ENCODE measurements at regions of chr2 and their contacts with region 1.

Region 1: DNA sequence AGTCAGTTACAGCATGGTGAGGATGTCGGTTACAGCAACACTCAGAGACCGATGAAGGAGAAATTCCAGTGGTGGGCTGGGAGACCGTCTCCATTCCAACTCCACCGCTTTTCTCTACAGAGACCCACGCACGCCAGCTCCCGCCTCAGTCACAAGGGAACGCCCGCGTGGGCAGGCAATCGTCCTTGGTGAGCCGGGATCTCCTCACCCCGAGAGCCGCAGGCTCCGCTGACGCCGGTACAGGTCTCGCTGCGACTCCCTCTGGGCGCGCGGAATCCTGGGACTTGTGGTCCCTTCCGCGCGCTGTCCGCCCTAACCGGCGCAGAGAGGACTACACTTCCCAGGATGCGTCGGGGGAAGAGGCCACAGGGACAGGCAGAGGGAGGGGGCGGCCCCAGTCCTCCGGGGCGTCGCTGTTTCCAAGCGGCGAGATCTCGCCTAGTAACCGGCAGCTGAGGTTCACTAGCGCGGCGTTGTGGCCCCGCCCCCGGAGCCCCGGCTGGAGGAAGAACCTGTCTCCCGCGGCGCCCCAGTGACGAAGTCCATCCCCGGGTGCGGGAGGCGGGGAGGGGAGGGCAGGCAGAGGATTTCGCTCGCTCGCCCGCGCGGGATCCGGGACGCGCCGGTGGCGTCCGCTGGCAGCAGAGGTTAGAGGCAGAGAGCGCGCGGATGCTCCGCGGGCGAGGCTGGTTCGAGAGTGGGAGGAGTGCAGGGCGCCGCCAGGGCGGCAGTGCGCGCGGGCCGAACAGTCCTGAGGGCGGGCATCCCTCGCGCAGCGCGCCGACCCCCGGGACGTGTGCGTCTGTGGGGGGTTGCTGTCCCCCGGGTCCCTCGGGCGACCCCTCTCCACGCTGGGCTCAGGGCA is at the start of gene EML6:
- DNase-seq: peak; percentile 97 to 98
- ATAC-seq: peak; percentile 99 to 100 (median 100)
- H3K4me3 ChIP-seq: peak within 1 kb of the TSS; percentile 65 to 93 (median 82)
- H3K27ac ChIP-seq: peak within 1 kb of the TSS in 9 of 10 donors; percentile 65 to 81 (median 70)
- H3K4me1 ChIP-seq: peaks cover 0 to 17% (median 9%) of the 10 kb centered on the region in 9 donors
- H3K27me3 ChIP-seq: peaks cover 0 to 50% (median 0%) of the 10 kb centered on the region in 7 donors
- CTCF ChIP-seq: peak in 7 of 9 donors; percentile 16 to 47 (median 27)
- total RNA-seq, gene EML6: 0.12 to 1.5 (median 0.32) TPM

Region 2: DNA sequence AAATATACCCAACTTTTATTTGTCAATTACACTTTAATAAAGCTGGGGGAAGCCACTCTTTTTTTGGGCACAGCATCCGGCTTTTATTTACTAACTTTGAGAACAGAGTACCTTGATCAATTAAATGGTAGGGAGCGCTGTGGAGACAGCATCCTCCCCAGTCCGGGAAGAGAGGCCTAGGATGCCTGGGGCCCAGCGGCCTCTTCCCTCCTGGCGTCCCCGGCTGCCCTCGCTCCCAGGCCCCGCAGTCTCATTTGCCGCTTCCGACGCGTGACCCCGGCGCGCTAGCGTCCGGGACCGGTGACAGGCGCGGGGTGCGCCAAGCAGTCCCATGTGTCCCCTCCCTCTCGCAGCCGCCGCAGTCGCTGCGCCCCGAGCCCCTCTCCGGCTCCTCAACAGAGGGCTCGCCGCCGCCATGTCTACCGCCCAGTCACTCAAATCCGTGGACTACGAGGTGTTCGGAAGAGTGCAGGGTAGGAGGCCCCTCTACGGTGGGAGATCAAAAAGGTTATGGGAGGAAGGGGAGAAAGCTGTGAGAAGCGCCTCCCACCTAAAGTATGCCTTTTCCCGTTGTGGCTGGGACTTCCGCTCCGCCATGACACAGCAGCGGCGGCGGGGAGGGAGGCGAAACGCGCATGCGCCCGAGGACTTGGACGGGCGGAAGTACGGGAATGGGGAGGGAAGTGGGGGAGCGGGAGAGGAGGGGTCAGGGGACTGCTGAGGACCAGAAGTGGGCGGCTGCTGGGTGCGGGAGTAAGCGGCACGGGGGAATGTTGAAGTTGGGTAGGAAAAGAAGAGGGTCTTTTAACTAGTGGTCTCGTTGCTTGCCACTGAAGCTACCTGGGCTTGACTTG is 607.9 kb before region 1 on chr2 and contains the start of gene ACYP2:
- intact Hi-C with region 1: loop called in 1 of 10 experiments (anchors 5 kb)
- DNase-seq: peak; percentile 97 to 98
- ATAC-seq: peak; percentile 97 to 99 (median 99)
- H3K4me3 ChIP-seq: peak within 1 kb of the TSS; percentile 49 to 87 (median 64)
- H3K27ac ChIP-seq: peak within 1 kb of the TSS; percentile 94 to 100 (median 98)
- H3K4me1 ChIP-seq: peaks cover 0 to 14% (median 8%) of the 10 kb centered on the region in 9 donors
- H3K27me3 ChIP-seq: no peaks in the 10 kb centered on the region
- CTCF ChIP-seq: peak in 6 of 9 donors; percentile 10 to 54 (median 38)
- total RNA-seq, gene ACYP2: 48.6 to 87.1 (median 78.1) TPM

Region 3: DNA sequence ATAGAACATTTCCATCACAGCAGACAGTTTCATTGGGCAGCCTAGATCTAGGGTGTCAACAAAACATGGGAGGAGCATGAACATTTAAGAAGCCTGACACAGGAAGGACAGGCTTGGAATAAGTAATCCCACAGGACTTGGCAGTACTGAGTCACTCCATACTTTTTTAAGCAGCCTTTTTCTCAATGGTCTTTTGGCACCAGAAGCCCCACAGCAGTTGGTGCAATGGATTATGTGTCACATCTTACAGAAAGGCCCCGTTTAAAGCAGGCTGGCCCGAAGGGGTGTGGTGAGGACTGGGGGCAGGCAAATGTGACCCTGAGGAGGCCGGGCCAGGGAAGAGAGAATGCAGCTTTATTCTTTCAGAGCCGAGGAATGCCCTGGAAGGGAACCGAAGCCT is 240.6 kb before region 1 on chr2:
- intact Hi-C with region 1: no loop called
- DNase-seq: peak in 1 of 2 donors; percentile 37
- ATAC-seq: peak; percentile 25 to 84 (median 48)
- H3K4me3 ChIP-seq: peak overlapping the region in 2 of 10 donors; percentile 9 to 10
- H3K27ac ChIP-seq: peak overlapping the region in 9 of 10 donors; percentile 4 to 82 (median 64)
- H3K4me1 ChIP-seq: peaks cover 18 to 89% (median 81%) of the 10 kb centered on the region in 9 donors
- H3K27me3 ChIP-seq: no peaks in the 10 kb centered on the region
- CTCF ChIP-seq: no peak

Region 4: GRCh38 chr2:54589340-54590215 is 133.8 kb before region 1 on chr2:
- intact Hi-C with region 1: no loop called
- DNase-seq: peak in 1 of 2 donors; percentile 64
- ATAC-seq: peak; percentile 66 to 89 (median 76)
- H3K4me3 ChIP-seq: peak overlapping the region in 1 of 10 donors; percentile 11
- H3K27ac ChIP-seq: peak overlapping the region in 9 of 10 donors; percentile 60 to 89 (median 75)
- H3K4me1 ChIP-seq: peaks cover 33 to 99% (median 85%) of the 10 kb centered on the region in 9 donors
- H3K27me3 ChIP-seq: no peaks in the 10 kb centered on the region
- CTCF ChIP-seq: no peak